ENCODE measurements at regions of chr4 and their contacts with region 1.

Region 1: DNA sequence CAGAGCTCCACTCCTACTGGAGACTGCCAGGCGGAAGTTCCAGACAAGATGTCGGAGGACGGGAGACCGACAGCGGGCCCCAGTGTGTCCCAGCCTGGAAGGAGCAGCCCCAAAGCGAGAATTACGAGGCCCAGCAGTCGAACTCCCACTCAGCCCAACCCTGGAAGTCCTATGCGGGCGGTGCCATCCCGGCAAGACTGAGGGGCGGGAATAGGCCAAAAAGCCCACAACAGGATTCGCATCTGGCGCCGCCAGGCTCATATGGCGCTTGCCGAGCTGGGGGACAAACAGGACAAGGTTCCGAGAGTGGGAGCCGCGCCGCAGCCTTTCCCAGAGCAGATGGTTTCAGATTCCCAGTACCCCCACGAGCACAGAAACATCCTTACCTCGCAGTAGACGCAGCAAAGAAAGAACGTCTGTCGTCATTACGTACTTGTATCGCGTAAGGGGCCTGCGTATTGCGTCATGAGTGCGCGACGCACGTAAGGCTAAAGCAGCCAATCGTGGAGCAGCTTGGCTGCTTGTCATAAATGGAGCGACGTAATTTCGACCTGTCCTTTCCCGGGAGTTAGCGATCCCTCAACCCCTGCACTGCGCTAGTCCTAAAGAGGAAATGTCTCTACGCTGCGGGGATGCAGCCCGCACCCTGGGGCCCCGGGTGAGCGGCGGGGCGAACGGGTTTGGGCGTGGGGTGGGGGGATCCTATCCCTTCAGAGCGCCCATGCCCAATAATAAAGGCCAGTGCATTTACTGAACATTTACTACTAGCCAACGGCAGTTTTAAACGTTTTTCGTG is at the starts of genes LIAS and RPL9:
- DNase-seq: peak; percentile 96
- ATAC-seq: peak; percentile 88
- H3K4me3 Mint-ChIP-seq: peak within 1 kb of the TSS; percentile 98
- H3K27ac Mint-ChIP-seq: peak within 1 kb of the TSS; percentile 100
- H3K4me1 Mint-ChIP-seq: peaks cover 44% of the 10 kb centered on the region
- H3K27me3 Mint-ChIP-seq: no peaks in the 10 kb centered on the region
- total RNA-seq, gene LIAS: 30.7 to 35.5 TPM
- total RNA-seq, gene RPL9: 1,442 to 2,369 TPM

Region 2: GRCh38 chr4:39044364-39044955 is 414.2 kb before region 1 on chr4:
- CTCF ChIA-PET with region 1: interaction called, 3 read pairs
- POLR2A ChIA-PET with region 1: no interaction called
- intact Hi-C with region 1: loop called in 1 of 2 experiments (anchors 1 kb)
- DNase-seq: peak; percentile 99
- ATAC-seq: peak; percentile 87
- H3K4me3 Mint-ChIP-seq: peak overlapping the region; percentile 76
- H3K27ac Mint-ChIP-seq: peak overlapping the region; percentile 69
- H3K4me1 Mint-ChIP-seq: peaks cover 48% of the 10 kb centered on the region
- H3K27me3 Mint-ChIP-seq: no peaks in the 10 kb centered on the region

Region 3: GRCh38 chr4:39353478-39354253 is 105.0 kb before region 1 on chr4:
- CTCF ChIA-PET with region 1: interaction called, 4 read pairs
- POLR2A ChIA-PET with region 1: interaction called, 3 read pairs
- intact Hi-C with region 1: loop called (anchors 1 to 2 kb)
- DNase-seq: peak; percentile 47
- ATAC-seq: peak; percentile 85
- H3K4me3 Mint-ChIP-seq: peak overlapping the region; percentile 70
- H3K27ac Mint-ChIP-seq: peak overlapping the region; percentile 94
- H3K4me1 Mint-ChIP-seq: peaks cover 79% of the 10 kb centered on the region
- H3K27me3 Mint-ChIP-seq: no peaks in the 10 kb centered on the region

Region 4: DNA sequence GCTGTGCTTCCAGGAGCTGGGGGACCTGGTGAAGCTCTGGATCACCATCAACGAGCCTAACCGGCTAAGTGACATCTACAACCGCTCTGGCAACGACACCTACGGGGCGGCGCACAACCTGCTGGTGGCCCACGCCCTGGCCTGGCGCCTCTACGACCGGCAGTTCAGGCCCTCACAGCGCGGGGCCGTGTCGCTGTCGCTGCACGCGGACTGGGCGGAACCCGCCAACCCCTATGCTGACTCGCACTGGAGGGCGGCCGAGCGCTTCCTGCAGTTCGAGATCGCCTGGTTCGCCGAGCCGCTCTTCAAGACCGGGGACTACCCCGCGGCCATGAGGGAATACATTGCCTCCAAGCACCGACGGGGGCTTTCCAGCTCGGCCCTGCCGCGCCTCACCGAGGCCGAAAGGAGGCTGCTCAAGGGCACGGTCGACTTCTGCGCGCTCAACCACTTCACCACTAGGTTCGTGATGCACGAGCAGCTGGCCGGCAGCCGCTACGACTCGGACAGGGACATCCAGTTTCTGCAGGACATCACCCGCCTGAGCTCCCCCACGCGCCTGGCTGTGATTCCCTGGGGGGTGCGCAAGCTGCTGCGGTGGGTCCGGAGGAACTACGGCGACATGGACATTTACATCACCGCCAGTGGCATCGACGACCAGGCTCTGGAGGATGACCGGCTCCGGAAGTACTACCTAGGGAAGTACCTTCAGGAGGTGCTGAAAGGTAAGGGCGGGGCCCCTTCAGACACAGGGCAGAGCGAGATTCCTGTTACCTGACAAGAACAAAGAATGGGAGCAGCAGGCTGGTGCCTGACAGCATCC is 11.7 kb before region 1 on chr4:
- CTCF ChIA-PET with region 1: interaction called, 10 read pairs
- POLR2A ChIA-PET with region 1: interaction called, 3 read pairs
- intact Hi-C with region 1: no loop called
- DNase-seq: peak; percentile 76
- ATAC-seq: peak; percentile 81
- H3K4me3 Mint-ChIP-seq: peak overlapping the region; percentile 21
- H3K27ac Mint-ChIP-seq: no peak overlapping the region
- H3K4me1 Mint-ChIP-seq: peaks cover 25% of the 10 kb centered on the region
- H3K27me3 Mint-ChIP-seq: no peaks in the 10 kb centered on the region

Region 5: DNA sequence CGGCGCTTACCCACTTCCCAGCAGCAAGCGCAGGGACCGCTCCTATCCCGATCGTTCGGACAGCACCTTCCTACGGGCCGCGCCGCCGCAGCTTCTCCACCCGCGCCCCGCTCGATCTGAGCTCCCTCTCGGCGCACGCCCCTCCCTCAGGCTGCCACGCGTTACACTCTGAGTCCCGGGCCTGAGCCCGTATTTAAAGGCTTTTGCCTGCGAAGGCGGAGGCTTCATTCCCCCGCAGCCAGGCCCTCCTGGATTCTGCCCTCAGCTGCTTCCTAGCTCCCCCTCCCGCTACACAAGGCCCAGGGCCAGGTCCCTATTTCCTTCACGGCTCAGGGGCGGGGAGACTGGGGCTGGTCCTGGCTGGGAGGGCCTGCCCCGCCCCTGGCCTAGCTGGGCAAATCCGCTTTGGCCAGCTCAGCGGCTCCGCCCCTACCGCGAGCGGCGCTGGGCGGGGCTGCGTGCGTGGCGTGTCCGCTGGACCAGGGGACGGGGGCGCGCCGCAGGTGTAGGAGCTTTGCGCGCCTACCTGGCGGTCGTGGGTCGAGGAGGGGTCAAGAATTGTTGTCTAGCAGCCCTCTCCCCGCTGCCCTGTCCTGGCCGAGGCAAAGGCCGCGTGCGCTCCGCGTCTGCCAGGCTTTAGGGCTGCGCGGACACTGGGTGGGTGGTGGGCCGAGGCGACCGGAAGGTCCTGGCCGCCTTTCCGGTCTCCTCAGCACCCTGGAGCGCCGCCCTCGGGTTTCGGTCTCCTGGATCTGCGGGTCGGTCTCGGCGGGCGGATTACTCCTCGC is 68.8 kb after region 1 on chr4 and contains the start of gene UGDH:
- CTCF ChIA-PET with region 1: interaction called, 3 read pairs
- POLR2A ChIA-PET with region 1: no interaction called
- intact Hi-C with region 1: loop called (anchors 1 to 2 kb)
- DNase-seq: peak; percentile 95
- ATAC-seq: peak; percentile 99
- H3K4me3 Mint-ChIP-seq: peak within 1 kb of the TSS; percentile 87
- H3K27ac Mint-ChIP-seq: peak within 1 kb of the TSS; percentile 97
- H3K4me1 Mint-ChIP-seq: peaks cover 16% of the 10 kb centered on the region
- H3K27me3 Mint-ChIP-seq: no peaks in the 10 kb centered on the region
- total RNA-seq, gene UGDH: 30.2 to 31.3 TPM

Region 6: DNA sequence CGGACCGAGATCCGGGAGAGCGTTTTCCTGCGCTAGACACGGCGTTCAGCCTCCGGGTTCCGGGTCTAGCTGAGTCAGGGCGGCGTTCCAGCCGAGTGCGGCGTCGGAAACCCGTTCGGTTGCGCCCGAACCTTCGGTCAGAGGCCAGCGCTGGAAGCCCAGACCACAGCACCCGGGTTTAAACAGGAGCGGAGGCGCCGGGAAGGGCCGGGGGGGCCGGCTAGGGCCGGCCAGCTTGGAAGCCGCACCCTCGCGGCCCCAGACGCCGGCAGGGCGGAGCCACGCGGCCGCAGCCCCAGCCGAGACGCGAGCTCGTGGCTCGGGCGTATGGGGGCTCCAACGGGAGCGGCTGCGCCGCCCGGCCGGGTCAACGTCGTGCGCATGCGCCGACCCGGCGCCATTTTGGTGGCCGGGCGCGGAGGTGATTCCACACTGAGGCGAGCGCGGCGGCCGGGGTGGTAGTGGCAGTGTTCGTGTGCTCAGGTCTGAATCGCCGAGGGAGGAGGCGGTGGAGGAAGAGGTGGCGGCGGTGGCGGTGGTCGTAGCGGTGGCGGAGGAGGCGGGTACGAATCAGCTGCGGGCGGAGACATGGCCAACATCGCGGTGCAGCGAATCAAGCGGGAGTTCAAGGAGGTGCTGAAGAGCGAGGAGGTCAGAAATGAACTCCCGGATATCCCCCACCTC is 239.2 kb after region 1 on chr4 and contains the start of gene UBE2K:
- CTCF ChIA-PET with region 1: interaction called, 3 read pairs
- POLR2A ChIA-PET with region 1: no interaction called
- intact Hi-C with region 1: loop called (anchors 1 to 2 kb)
- DNase-seq: peak; percentile 93
- ATAC-seq: peak; percentile 87
- H3K4me3 Mint-ChIP-seq: peak within 1 kb of the TSS; percentile 99
- H3K27ac Mint-ChIP-seq: peak within 1 kb of the TSS; percentile 99
- H3K4me1 Mint-ChIP-seq: peaks cover 28% of the 10 kb centered on the region
- H3K27me3 Mint-ChIP-seq: no peaks in the 10 kb centered on the region
- total RNA-seq, gene UBE2K: 87.2 to 122 TPM

Region 7: DNA sequence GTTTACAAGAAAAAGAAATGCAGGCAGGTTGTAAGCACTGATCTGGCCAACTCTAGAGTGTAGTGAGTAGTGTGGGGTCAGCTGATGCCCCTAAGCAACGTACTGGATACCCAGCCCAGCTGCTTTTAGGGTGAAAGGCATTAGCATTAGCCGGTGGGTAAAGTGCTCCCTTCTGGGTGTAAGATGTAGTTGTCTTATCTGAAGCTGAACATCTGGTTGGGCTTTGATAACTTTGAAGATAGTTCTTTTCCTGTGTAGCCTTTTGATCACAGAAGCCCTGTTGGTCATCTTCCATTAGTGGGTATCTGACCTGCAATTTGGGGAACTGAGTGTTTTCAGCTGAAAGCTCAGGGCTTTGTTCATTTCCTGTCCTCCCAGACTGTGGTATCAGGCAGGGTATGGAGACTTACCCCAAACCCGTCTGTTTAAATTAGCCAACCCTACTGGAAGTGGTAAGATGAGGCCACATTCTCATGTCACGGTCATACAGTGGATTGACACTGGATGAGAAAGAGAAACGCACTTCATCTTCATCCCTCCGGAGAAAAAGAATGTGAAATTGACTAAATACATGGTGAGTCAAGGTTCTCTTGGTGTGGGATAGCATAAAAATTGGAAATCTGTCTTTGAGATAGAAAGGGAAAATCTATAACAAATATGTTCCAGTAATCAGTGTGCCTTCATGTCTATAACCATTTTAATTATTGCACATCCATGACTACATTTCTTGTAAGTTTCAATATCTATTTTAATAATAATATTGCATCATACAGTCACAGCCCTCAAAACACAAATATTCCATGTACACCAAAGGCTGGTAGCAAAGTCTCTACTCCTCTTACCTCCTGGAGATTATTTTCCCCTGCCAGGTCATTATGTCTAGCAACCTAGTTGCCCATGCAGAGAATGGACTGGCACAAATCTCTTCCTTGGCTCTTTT is 746.8 kb after region 1 on chr4:
- CTCF ChIA-PET with region 1: no interaction called
- POLR2A ChIA-PET with region 1: no interaction called
- intact Hi-C with region 1: loop called in 1 of 2 experiments (anchors 2 kb)
- DNase-seq: peak; percentile 55
- ATAC-seq: peak; percentile 59
- H3K4me3 Mint-ChIP-seq: peak overlapping the region; percentile 98
- H3K27ac Mint-ChIP-seq: peak overlapping the region; percentile 100
- H3K4me1 Mint-ChIP-seq: peaks cover 62% of the 10 kb centered on the region
- H3K27me3 Mint-ChIP-seq: no peaks in the 10 kb centered on the region